B cell (primary cell): ENCODE measurements at regions of chr12 and their contacts with region 1.

Region 1: DNA sequence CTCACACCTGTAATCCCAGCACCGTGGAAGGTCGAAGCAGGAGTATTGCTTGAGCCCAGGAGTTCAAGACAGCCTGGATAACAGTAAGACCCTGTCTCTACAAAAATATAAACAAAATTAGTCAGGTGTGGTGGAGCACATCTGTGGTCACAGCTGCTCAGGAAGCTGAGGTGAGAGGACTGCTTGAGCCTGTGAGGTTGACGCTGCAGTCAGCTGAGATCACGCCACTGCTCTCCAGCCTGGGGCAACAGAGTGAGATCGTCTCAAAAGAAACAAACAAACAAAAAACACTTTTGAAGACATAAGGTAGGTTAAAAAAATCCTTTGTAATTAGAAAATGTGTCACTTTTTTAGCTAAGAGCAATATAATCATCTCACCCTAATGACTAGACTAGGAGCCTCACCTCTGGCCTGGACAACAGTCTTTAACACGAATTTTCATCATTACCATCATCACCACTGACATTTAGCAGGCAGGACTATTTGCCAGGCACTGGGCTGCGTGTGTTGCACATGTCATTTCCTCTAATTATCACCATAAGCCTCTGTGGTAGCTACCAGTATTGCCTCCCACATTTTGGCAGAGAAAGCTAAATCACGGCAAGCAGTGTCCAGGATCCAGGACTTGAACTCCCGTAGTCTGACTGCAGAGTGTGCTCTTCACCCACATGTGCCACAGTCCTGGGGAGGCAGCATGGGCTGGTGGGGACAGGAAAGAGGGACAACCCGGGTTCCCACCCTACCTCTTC is 4.6 kb upstream of the SYCP3 start:
- DNase-seq: peak; percentile 95
- ATAC-seq: peak; percentile 86
- H3K4me3 ChIP-seq: peak overlapping the region in 1 of 5 experiments; percentile 42
- H3K4me3 Mint-ChIP-seq: peak overlapping the region; percentile 48
- H3K27ac ChIP-seq: peak overlapping the region; percentile 94 to 97
- H3K27ac Mint-ChIP-seq: peak overlapping the region; percentile 99
- H3K4me1 ChIP-seq: peaks cover 45 to 50% of the 10 kb centered on the region in 2 donors
- H3K4me1 Mint-ChIP-seq: peaks cover 70% of the 10 kb centered on the region
- H3K27me3 ChIP-seq: no peaks in the 10 kb centered on the region
- H3K27me3 Mint-ChIP-seq: no peaks in the 10 kb centered on the region
- CTCF ChIP-seq: peak; percentile 59

Region 2: GRCh38 chr12:101634724-101635123 is 109.2 kb before region 1 on chr12:
- CTCF ChIA-PET with region 1: no interaction called
- POLR2A ChIA-PET with region 1: no interaction called
- intact Hi-C with region 1: loop called (anchors 1 kb)
- DNase-seq: peak; percentile 81
- ATAC-seq: peak; percentile 94
- H3K4me3 ChIP-seq: peak overlapping the region; percentile 1 to 45 (median 29)
- H3K4me3 Mint-ChIP-seq: peak overlapping the region; percentile 78
- H3K27ac ChIP-seq: peak overlapping the region; percentile 77 to 86
- H3K27ac Mint-ChIP-seq: peak overlapping the region; percentile 92
- H3K4me1 ChIP-seq: peaks cover 33 to 34% of the 10 kb centered on the region in 2 donors
- H3K4me1 Mint-ChIP-seq: peaks cover 32% of the 10 kb centered on the region
- H3K27me3 ChIP-seq: no peaks in the 10 kb centered on the region
- H3K27me3 Mint-ChIP-seq: no peaks in the 10 kb centered on the region
- CTCF ChIP-seq: no peak

Region 3: DNA sequence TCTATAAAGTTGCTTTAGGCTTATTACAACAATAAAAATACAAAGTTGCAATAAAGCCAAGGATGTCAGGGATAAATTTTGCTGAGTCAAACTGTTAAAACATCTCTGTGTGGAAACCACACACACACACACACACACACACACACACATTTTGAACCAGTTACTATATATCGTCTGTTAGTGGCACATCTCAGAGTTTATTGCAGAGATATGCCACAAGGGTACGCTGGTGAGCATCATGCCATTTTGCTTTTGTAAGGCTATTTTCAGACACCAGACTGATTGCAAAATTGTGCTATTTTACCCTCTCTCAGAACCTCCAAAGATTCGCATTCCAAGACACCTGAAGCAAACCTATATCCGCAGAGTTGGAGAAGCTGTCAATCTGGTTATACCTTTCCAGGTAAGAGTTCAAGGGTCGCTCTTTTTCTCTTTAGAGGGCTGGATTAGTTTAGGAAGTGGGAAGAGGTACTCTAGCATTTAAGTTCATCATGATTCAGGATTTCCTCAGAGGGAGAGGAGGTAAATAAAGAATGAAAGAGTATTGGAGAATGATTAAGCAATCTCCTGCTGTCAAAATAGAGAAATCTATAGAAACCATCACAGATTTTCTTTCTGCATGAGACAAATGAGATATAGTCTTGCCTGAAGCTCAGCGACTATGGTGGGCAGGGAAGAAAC is 73.8 kb before region 1 on chr12:
- CTCF ChIA-PET with region 1: interaction called, 8 read pairs
- POLR2A ChIA-PET with region 1: no interaction called
- intact Hi-C with region 1: loop called (anchors 2 kb)
- DNase-seq: peak; percentile 73
- ATAC-seq: peak; percentile 60
- H3K4me3 ChIP-seq: no peak overlapping the region
- H3K4me3 Mint-ChIP-seq: peak overlapping the region; percentile 14
- H3K27ac ChIP-seq: no peak overlapping the region
- H3K27ac Mint-ChIP-seq: peak overlapping the region; percentile 50
- H3K4me1 ChIP-seq: peaks cover 22 to 25% of the 10 kb centered on the region in 2 donors
- H3K4me1 Mint-ChIP-seq: peaks cover 22% of the 10 kb centered on the region
- H3K27me3 ChIP-seq: no peaks in the 10 kb centered on the region
- H3K27me3 Mint-ChIP-seq: peaks cover 7% of the 10 kb centered on the region
- CTCF ChIP-seq: peak; percentile 75

Region 4: DNA sequence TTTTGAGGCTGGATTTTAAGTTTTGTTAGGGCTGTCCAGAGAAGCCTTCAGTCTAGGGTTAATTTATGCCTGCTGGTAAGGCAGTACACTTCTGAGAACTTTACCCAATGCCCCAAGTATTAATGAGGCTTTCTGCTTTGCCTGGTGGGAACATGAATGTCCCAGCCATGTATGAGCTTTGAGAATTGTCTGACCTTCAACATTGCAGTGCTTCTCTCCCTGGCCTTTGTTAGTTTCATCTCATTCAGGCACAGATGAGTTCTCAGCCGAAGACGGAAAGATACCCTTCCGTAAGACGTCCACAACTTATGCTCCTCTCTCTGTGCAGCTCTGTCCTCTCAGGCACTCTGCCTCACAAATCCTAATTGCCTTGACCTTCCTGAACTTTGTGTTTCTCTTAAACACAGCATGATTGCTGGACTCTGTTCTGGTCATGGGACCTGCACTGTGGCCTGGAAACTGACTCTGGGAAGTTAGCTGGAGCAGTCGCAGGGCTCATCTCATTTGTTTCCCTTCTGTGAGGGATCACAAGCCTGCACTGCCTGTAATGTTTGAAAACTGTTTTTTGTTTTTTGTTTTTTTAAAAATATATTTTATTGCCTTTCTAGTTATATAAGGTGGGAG is 30.7 kb before region 1 on chr12:
- CTCF ChIA-PET with region 1: no interaction called
- POLR2A ChIA-PET with region 1: no interaction called
- intact Hi-C with region 1: no loop called
- DNase-seq: no peak
- ATAC-seq: no peak
- H3K4me3 ChIP-seq: no peak overlapping the region
- H3K4me3 Mint-ChIP-seq: no peak overlapping the region
- H3K27ac ChIP-seq: no peak overlapping the region
- H3K27ac Mint-ChIP-seq: no peak overlapping the region
- H3K4me1 ChIP-seq: peaks cover 5 to 25% of the 10 kb centered on the region in 2 donors
- H3K4me1 Mint-ChIP-seq: peaks cover 43% of the 10 kb centered on the region
- H3K27me3 ChIP-seq: no peaks in the 10 kb centered on the region
- H3K27me3 Mint-ChIP-seq: no peaks in the 10 kb centered on the region
- CTCF ChIP-seq: no peak

Region 5: GRCh38 chr12:101727133-101727532 is 16.8 kb before region 1 on chr12:
- CTCF ChIA-PET with region 1: interaction called, 6 read pairs
- POLR2A ChIA-PET with region 1: interaction called, 5 read pairs
- intact Hi-C with region 1: loop called (anchors 1 kb)
- DNase-seq: no peak
- ATAC-seq: no peak
- H3K4me3 ChIP-seq: no peak overlapping the region
- H3K4me3 Mint-ChIP-seq: no peak overlapping the region
- H3K27ac ChIP-seq: no peak overlapping the region
- H3K27ac Mint-ChIP-seq: no peak overlapping the region
- H3K4me1 ChIP-seq: peaks cover 1 to 4% of the 10 kb centered on the region in 2 donors
- H3K4me1 Mint-ChIP-seq: peaks cover 5% of the 10 kb centered on the region
- H3K27me3 ChIP-seq: no peaks in the 10 kb centered on the region
- H3K27me3 Mint-ChIP-seq: no peaks in the 10 kb centered on the region
- CTCF ChIP-seq: no peak

Region 6: GRCh38 chr12:101732318-101732717 is 11.6 kb before region 1 on chr12:
- CTCF ChIA-PET with region 1: interaction called, 8 read pairs
- POLR2A ChIA-PET with region 1: interaction called, 3 read pairs
- intact Hi-C with region 1: loop called (anchors 1 kb)
- DNase-seq: peak; percentile 39
- ATAC-seq: peak; percentile 41
- H3K4me3 ChIP-seq: no peak overlapping the region
- H3K4me3 Mint-ChIP-seq: no peak overlapping the region
- H3K27ac ChIP-seq: no peak overlapping the region
- H3K27ac Mint-ChIP-seq: peak overlapping the region; percentile 24
- H3K4me1 ChIP-seq: peaks cover 8% of the 10 kb centered on the region in 2 donors
- H3K4me1 Mint-ChIP-seq: peaks cover 16% of the 10 kb centered on the region
- H3K27me3 ChIP-seq: no peaks in the 10 kb centered on the region
- H3K27me3 Mint-ChIP-seq: no peaks in the 10 kb centered on the region
- CTCF ChIP-seq: no peak

Region 7: GRCh38 chr12:101773650-101774162 is 29.8 kb after region 1 on chr12:
- CTCF ChIA-PET with region 1: interaction called, 12 read pairs
- POLR2A ChIA-PET with region 1: no interaction called
- intact Hi-C with region 1: loop called (anchors 1 kb)
- DNase-seq: peak; percentile 77
- ATAC-seq: peak; percentile 86
- H3K4me3 ChIP-seq: no peak overlapping the region
- H3K4me3 Mint-ChIP-seq: no peak overlapping the region
- H3K27ac ChIP-seq: no peak overlapping the region
- H3K27ac Mint-ChIP-seq: no peak overlapping the region
- H3K4me1 ChIP-seq: no peaks in the 10 kb centered on the region
- H3K4me1 Mint-ChIP-seq: peaks cover 1% of the 10 kb centered on the region
- H3K27me3 ChIP-seq: no peaks in the 10 kb centered on the region
- H3K27me3 Mint-ChIP-seq: no peaks in the 10 kb centered on the region
- CTCF ChIP-seq: peak; percentile 98

Region 8: GRCh38 chr12:101792051-101792931 is 48.4 kb after region 1 on chr12:
- CTCF ChIA-PET with region 1: no interaction called
- POLR2A ChIA-PET with region 1: no interaction called
- intact Hi-C with region 1: no loop called
- DNase-seq: no peak
- ATAC-seq: no peak
- H3K4me3 ChIP-seq: no peak overlapping the region
- H3K4me3 Mint-ChIP-seq: no peak overlapping the region
- H3K27ac ChIP-seq: no peak overlapping the region
- H3K27ac Mint-ChIP-seq: no peak overlapping the region
- H3K4me1 ChIP-seq: peaks cover 0 to 5% of the 10 kb centered on the region in 2 donors
- H3K4me1 Mint-ChIP-seq: peaks cover 6% of the 10 kb centered on the region
- H3K27me3 ChIP-seq: no peaks in the 10 kb centered on the region
- H3K27me3 Mint-ChIP-seq: no peaks in the 10 kb centered on the region
- CTCF ChIP-seq: no peak

Region 9: DNA sequence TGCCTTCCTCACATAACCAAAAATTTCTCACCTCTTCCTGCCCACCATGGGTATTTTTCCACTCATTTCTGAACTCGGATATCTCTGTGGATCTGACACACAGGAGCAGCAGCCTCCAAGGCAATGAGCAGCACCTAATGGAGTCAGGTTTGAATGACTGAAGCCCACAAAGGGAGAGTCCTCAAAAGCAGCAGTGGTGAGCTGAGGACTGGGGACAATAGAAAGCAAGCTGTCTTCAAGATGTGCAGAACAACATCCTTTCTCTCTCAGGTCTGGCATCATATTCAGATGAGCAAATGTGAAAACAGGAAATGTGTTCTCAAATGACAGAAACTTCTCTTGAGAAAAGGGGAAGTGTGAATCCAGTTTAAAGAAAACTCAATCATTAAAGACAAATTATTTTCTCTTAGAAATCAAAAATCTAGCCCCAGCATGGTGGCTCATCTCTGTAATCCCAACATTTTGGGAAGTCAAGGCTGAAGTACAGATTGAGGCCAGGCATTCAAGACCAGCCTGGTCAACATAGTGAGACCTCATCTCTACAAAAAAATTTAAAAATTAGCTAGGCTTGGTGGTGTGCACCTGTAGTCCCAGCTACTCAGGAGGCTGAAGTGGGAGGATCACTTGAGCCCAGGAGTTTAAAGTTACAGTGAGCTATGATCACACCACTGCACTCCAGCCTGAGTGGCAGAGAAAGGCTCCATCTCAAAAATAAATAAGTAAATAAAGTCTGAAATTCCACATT is 1697.7 kb after region 1 on chr12:
- CTCF ChIA-PET with region 1: no interaction called
- POLR2A ChIA-PET with region 1: no interaction called
- intact Hi-C with region 1: loop called (anchors 10 kb)
- DNase-seq: peak; percentile 89
- ATAC-seq: peak; percentile 98
- H3K4me3 ChIP-seq: peak overlapping the region; percentile 46 to 97 (median 73)
- H3K4me3 Mint-ChIP-seq: peak overlapping the region; percentile 97
- H3K27ac ChIP-seq: peak overlapping the region; percentile 87 to 95
- H3K27ac Mint-ChIP-seq: peak overlapping the region; percentile 98
- H3K4me1 ChIP-seq: peaks cover 24% of the 10 kb centered on the region in 2 donors
- H3K4me1 Mint-ChIP-seq: peaks cover 28% of the 10 kb centered on the region
- H3K27me3 ChIP-seq: no peaks in the 10 kb centered on the region
- H3K27me3 Mint-ChIP-seq: no peaks in the 10 kb centered on the region
- CTCF ChIP-seq: no peak